ENCODE measurements at regions of chr1 and their contacts with region 1.

Region 1: GRCh38 chr1:26998429-26999300 is 5.2 kb downstream of the TRNP1 start:
- DNase-seq: no peak
- ATAC-seq: no peak
- H3K4me3 Mint-ChIP-seq: no peak overlapping the region
- H3K27ac Mint-ChIP-seq: no peak overlapping the region
- H3K4me1 Mint-ChIP-seq: peaks cover 4% of the 10 kb centered on the region
- H3K27me3 Mint-ChIP-seq: peaks cover 25% of the 10 kb centered on the region

Region 2: GRCh38 chr1:26986658-26987057 is 12.0 kb before region 1 on chr1:
- CTCF ChIA-PET with region 1: interaction called, 12 read pairs
- POLR2A ChIA-PET with region 1: interaction called, 9 read pairs
- intact Hi-C with region 1: no loop called
- DNase-seq: no peak
- ATAC-seq: no peak
- H3K4me3 Mint-ChIP-seq: no peak overlapping the region
- H3K27ac Mint-ChIP-seq: no peak overlapping the region
- H3K4me1 Mint-ChIP-seq: peaks cover 6% of the 10 kb centered on the region
- H3K27me3 Mint-ChIP-seq: peaks cover 26% of the 10 kb centered on the region

Region 3: DNA sequence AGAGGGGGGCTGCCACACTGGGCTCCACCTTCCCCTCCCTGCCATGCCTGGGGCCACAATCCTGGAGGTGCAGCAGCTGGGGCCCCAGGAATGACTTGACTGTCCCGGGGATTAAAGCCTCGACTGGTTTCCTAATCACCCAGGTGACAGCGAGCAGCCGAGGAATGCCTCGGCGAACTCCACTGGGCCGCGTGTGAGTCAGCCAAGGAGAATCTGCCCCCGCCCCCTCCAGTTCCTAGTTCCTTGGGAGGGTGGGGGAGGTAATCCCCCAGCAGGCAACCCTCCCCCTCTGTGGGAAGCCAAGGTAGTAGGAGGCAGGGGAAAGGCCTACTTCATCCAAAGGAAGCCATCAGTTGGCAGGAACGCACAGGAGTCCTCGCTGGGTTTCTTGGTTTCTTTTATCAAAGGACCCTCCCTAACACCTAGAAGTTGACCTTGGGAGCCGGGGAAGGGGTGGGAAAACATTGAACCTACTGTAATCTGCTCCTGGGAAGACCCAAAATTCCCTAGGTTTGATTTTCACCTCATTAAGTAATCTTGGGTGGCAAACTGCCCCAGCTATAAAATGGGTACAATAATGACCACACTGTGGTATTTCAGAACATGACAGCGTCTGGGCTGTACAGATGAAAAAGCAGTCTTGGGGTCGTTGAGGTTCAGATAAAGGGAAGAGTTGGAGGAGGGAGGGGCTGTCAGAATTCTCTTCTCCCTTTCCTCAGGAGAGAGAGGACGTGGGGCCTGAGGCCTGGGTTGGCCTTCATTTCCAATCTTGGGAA is 12.5 kb after region 1 on chr1:
- CTCF ChIA-PET with region 1: interaction called, 4 read pairs
- POLR2A ChIA-PET with region 1: interaction called, 6 read pairs
- intact Hi-C with region 1: loop called (anchors 1 kb)
- DNase-seq: no peak
- ATAC-seq: no peak
- H3K4me3 Mint-ChIP-seq: no peak overlapping the region
- H3K27ac Mint-ChIP-seq: no peak overlapping the region
- H3K4me1 Mint-ChIP-seq: peaks cover 4% of the 10 kb centered on the region
- H3K27me3 Mint-ChIP-seq: peaks cover 23% of the 10 kb centered on the region

Region 4: GRCh38 chr1:27097484-27097917 is 98.8 kb after region 1 on chr1:
- CTCF ChIA-PET with region 1: interaction called, 6 read pairs
- POLR2A ChIA-PET with region 1: no interaction called
- intact Hi-C with region 1: loop called in 1 of 2 experiments (anchors 1 kb)
- DNase-seq: peak; percentile 87
- ATAC-seq: peak; percentile 84
- H3K4me3 Mint-ChIP-seq: no peak overlapping the region
- H3K27ac Mint-ChIP-seq: no peak overlapping the region
- H3K4me1 Mint-ChIP-seq: peaks cover 9% of the 10 kb centered on the region
- H3K27me3 Mint-ChIP-seq: no peaks in the 10 kb centered on the region